RWPE1 (cell line): ENCODE measurements at regions of chr14 and their contacts with region 1.

Region 1: GRCh38 chr14:34593740-34594375 is 36.1 kb downstream of the SNX6 start:
- DNase-seq: no peak
- H3K27ac ChIP-seq: no peak overlapping the region
- CTCF ChIP-seq: no peak

Region 2: DNA sequence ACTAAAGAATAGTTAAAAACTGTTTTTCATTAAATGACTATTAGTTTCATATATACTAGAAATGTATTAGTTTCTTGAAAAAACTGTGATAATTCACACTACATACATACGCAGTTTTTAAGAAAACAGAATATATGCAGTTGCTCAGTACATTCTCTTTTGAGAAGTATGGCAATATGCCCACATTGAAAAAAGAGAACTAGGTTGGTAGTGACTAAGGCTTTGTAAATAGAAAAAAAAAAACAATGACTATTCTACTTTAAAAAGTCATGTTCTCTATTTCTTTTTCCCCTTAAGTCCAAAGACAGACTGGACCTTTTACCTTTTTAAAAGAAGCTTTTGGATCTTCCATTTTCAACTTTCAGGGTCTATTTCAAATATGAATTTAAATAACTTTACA is 11.1 kb after region 1 on chr14:
- CTCF ChIA-PET with region 1: no interaction called
- POLR2A ChIA-PET with region 1: no interaction called
- DNase-seq: no peak
- H3K27ac ChIP-seq: no peak overlapping the region
- CTCF ChIP-seq: no peak

Region 3: DNA sequence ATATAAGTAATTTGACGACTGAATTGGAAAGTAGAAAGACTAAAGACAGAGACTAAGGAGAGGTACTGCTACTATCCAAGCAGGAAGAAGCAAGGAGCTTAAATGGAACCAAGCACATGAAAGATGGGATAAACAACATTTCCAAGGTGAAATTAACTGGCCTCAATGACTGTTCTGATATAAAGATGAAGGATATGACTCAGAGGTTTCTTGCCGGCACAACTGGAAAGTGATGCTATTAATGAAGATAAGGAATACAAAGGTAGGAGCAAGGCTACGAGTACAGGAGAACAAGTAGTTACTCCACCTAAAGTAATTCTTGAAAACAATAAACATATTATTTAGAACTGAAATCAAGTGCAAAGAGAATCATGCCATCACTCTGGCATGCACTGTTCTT is 29.6 kb after region 1 on chr14:
- CTCF ChIA-PET with region 1: no interaction called
- POLR2A ChIA-PET with region 1: interaction called, 10 read pairs
- DNase-seq: peak; percentile 10
- H3K27ac ChIP-seq: no peak overlapping the region
- CTCF ChIP-seq: no peak

Region 4: GRCh38 chr14:34633742-34634141 is 39.9 kb after region 1 on chr14:
- CTCF ChIA-PET with region 1: no interaction called
- POLR2A ChIA-PET with region 1: no interaction called
- DNase-seq: no peak
- H3K27ac ChIP-seq: no peak overlapping the region
- CTCF ChIP-seq: no peak

Region 5: DNA sequence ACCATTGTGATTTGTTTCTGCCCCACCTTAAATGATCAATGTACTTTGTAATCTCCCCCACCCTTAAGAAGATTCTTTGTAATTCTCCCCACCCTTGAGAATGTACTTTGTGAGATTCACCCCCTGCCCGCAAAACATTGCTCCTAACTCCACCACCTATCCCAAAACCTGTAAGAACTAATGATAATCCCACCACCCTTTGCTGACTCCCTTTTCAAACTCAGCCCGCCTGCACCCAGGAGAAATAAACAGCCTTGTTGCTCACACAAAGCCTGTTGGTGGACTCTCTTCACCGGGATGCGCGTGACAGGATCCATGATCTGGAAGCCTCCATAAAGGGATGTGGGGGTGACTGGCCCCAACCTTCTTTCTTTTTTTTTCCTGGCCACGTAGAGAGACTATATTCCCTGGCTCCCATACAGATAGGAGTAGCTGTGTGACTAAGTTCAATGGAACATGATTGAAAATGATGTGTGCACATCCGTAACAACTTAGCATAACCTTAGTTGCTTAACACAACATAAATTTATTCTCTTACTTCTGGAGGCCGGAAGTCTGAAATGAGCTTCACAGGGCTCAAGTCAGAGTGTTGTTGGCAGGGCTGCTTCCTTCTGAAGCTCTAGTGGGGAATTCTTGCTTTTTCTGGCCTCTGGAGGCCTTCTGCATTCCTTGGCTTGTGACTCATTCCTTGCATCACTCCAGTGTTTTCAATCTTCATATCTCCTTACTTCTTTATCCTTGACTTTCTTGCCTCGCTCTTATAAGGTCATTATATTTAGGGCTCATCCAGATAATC is 56.8 kb after region 1 on chr14:
- CTCF ChIA-PET with region 1: no interaction called
- POLR2A ChIA-PET with region 1: no interaction called
- DNase-seq: peak; percentile 87
- H3K27ac ChIP-seq: peak overlapping the region; percentile 92
- CTCF ChIP-seq: no peak

Region 6: DNA sequence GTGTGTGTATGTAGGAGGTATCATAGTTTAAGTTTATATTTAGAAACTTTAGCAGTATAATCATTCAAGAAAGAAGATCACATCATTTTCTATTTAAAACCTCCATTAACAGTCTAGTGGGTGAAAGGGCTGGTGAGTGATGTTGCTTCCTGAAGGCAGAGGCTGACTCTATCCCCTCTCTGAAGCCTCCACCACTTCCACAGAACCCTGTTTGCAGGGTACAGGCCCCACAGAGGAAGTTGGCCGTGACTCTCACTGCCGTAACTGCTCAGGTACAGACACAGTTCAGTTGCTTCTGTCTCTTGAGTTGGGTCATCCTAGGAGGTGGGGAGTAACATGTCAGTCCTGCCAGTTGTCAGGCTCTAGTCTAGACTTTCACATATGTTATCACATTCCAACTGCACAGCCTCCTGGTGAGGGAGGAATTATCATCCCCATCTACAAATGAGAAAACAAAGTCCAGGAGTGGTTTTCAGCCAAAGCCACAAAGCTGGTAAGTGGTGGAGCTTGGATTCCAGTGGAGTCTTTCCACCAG is 89.0 kb after region 1 on chr14:
- CTCF ChIA-PET with region 1: no interaction called
- POLR2A ChIA-PET with region 1: no interaction called
- DNase-seq: no peak
- H3K27ac ChIP-seq: no peak overlapping the region
- CTCF ChIP-seq: no peak